ENCODE measurements at regions of chrX and their contacts with region 1.

Region 1: GRCh38 chrX:109714340-109714958 is 18.6 kb downstream of the ACSL4 start:
- DNase-seq: no peak
- H3K4me3 Mint-ChIP-seq: no peak overlapping the region
- H3K27ac Mint-ChIP-seq: no peak overlapping the region
- H3K4me1 Mint-ChIP-seq: peaks cover 46% of the 10 kb centered on the region
- H3K27me3 Mint-ChIP-seq: no peaks in the 10 kb centered on the region

Region 2: DNA sequence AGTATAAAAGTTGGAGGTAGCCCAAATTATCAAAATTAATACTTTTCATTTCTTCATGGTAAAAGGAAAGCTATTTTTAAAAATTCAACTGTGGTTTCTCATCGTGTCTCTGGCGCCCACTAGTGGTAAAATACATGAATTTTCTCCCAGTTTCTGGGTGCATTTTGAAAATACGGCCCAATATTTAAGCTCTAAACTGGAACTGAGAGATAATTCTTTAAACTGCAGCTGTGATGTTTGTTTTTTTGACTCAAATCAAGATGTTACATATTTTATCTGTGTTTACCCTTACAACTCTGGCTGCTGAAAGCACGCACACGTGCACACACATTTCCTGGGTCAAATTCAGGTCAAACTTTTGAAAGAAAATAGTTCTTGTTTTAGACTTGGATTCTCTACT is 142.5 kb after region 1 on chrX:
- CTCF ChIA-PET with region 1: interaction called, 65 read pairs
- intact Hi-C with region 1: loop called (anchors 1 kb)
- DNase-seq: peak; percentile 15
- H3K4me3 Mint-ChIP-seq: no peak overlapping the region
- H3K27ac Mint-ChIP-seq: no peak overlapping the region
- H3K4me1 Mint-ChIP-seq: no peaks in the 10 kb centered on the region
- H3K27me3 Mint-ChIP-seq: no peaks in the 10 kb centered on the region